Heart left ventricle (tissue), 16 donors: ENCODE measurements at regions of chr10 and their contacts with region 1.

Region 1: DNA sequence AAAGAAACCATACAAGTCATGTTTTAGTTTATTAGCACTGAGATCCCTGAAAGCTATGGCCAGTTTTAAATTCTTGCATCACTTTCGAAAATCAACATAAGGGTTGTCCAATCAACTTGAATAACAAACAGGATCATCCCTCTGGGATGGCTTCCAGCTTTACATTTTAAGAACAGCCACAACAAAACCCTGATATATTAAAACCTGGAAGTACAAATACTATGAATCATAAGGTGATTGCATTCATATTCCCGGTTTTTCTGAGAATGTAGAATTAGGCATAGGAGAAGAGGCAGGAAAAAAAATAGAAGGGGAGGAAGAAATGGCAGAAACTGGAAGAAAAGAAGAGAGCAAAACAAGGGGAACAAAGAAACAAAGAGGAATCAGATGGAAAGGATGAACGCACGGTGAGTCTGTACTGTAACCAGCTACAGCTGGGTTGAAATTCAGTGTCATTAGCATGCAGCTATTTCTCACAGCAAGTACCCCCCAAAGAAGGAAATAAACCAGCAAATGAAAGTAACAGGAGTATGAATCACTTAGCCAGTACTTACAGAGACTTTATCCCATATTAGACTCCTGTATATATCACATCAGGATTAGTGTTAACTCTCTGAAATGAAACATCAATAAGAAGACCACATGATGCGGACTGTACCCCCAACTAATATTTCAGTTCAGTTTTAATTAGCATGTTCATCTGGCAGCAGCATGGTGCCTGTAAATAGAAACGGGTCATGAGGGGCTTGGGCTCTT is 301.3 kb downstream of the RNLS start:
- DNase-seq: no peak
- ATAC-seq: no peak
- H3K4me3 ChIP-seq: no peak overlapping the region
- H3K27ac ChIP-seq: no peak overlapping the region
- H3K4me1 ChIP-seq: peaks cover 0 to 11% (median 0%) of the 10 kb centered on the region in 12 donors
- H3K27me3 ChIP-seq: no peaks in the 10 kb centered on the region
- CTCF ChIP-seq: no peak
- POLR2A ChIP-seq: no peak

Region 2: DNA sequence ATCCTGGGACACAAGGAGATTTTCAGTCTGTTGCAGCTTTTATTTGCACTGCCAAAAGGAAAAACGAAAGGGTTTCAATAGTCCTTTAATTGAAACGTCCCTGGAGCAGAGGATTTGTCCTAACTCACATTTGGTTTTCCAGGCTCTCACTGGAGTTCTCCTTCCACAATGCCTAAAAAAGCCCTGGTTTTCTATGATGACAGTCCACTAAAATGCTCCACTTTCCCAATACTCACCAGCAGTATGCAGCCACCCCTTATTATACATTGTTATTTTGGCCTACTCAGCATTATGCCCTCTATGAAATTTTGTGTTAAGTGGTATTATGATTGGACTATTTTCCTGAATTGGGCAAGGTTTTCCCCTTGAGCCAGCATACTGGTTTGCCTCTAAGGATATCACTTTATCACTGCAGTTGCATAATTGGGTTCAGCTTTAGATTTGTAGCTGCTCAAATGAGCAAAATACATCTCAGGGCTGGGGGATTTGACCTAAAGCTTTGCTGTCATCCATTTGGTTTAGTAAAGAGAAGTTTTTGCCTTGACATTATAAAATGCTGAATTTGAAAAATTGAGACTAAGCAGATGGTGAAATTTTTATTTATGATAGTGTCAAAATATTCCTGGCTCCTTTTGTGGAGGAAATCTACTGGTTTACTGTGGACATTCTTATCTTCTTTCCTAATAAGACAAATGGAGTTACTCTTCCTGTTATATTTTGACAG is 62.2 kb after region 1 on chr10:
- intact Hi-C with region 1: loop called in 1 of 10 experiments (anchors 10 kb)
- DNase-seq: no peak
- ATAC-seq: peak in 3 of 4 donors; percentile 14 to 54 (median 32)
- H3K4me3 ChIP-seq: peak overlapping the region in 1 of 12 donors; percentile 5
- H3K27ac ChIP-seq: peak overlapping the region in 11 of 12 donors; percentile 7 to 66 (median 33)
- H3K4me1 ChIP-seq: peaks cover 0 to 33% (median 3%) of the 10 kb centered on the region in 12 donors
- H3K27me3 ChIP-seq: no peaks in the 10 kb centered on the region
- CTCF ChIP-seq: no peak
- POLR2A ChIP-seq: no peak